ENCODE measurements at regions of chr5 and their contacts with region 1.

Region 1: DNA sequence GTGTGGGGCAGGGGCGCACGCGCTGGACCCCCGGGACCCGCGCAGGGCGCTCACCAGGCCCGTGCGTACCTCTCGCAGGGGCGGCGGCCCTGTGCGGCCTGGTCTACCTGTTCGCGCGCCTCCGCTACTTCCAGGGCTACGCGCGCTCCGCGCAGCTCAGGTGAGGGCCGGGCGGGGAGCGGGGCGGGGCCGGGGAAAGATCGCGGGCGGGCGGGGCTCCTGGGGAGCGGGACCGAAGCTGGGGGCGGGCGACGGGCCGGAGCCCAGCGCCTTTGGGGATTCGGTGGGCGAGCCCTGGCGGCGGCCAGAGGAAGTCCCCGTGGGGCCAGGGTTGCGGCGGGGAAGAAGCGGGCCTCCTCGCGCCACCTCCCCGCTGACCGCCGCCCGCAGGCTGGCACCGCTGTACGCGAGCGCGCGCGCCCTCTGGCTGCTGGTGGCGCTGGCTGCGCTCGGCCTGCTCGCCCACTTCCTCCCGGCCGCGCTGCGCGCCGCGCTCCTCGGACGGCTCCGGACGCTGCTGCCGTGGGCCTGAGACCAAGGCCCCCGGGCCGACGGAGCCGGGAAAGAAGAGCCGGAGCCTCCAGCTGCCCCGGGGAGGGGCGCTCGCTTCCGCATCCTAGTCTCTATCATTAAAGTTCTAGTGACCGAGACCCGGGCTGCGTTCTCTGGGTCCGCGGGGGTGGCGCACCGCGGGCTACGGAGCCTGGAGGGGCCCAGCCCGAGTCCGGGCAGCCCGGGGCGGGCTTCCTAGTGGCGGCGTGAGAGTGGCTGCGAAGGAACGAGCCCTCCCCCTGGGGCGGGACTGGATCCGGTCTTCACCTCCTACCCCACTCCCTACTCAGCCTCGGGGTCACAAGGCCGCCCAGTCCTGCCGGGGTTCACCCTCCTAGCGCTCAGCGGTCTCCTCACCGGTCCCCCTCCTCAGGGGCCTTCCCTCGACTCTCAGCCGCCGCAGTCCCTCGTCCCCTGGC is 2.4 kb downstream of the LTC4S start:
- H3K4me3 Mint-ChIP-seq: peak overlapping the region; percentile 72
- H3K27ac Mint-ChIP-seq: peak overlapping the region; percentile 59
- H3K4me1 Mint-ChIP-seq: peaks cover 52% of the 10 kb centered on the region
- H3K27me3 Mint-ChIP-seq: no peaks in the 10 kb centered on the region

Region 2: DNA sequence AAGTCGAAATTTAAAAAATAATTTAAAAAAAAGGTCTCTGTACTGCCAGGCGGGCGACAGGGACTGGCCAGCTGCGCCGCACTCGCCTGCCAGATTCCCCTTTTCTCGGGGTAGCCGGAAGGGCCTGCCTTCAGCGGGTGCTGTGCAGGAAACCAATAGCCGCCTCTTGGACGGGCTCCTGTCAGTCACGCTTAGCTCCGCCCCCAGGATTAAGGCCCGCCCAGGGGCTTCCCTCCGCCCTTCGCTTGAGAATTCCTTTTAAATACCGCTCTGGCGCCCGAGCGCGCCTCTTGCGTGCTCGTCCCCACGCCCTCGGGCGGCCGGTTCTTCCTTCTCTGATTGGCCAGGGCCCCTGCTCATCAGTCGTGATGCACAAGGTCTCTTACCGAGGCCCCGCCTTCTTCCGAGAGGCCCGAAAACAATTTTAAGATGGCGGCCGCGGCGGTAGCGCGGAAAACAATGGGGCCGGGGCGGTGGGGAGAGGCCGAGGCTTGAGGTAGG is 63.7 kb before region 1 on chr5 and contains the start of gene MAML1:
- intact Hi-C with region 1: loop called (anchors 5 kb)
- H3K4me3 Mint-ChIP-seq: peak within 1 kb of the TSS; percentile 87
- H3K27ac Mint-ChIP-seq: peak within 1 kb of the TSS; percentile 88
- H3K4me1 Mint-ChIP-seq: peaks cover 63% of the 10 kb centered on the region
- H3K27me3 Mint-ChIP-seq: no peaks in the 10 kb centered on the region

Region 3: DNA sequence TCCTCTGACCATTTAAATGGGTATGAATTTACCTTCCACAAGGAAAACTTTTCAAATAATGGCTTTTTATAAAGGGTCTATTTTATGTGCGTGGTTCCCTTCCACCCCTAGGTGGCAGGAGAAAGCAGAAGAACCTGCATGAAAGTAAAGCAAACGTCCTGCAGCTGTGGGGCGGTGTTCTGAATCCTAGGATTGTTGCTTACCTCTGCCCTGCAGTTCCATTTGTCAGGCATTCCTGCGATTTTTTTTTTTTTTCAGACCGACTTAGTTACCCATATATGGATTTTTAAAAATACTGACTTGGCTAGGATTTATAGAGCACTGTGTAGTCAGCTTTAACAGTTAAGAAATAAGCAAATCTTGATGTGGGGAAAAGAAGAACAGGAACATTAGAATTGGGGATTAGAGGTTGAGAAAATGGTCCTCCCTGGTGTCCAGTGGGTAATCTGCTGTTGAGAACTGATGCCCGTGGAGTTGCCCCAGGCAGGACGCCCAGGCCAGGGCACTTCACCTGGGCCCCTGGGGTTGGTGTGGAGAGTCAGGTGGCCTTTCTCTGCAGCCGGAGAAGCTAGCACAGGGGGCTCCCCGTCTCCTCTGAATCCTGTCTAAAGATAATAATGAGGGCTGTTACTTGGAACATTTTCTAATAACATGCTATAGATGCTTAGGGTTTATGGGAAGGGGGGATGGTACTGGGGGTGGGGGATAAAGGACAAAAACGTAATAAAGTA is 32.8 kb before region 1 on chr5:
- intact Hi-C with region 1: loop called (anchors 5 kb)
- H3K4me3 Mint-ChIP-seq: no peak overlapping the region
- H3K27ac Mint-ChIP-seq: no peak overlapping the region
- H3K4me1 Mint-ChIP-seq: peaks cover 90% of the 10 kb centered on the region
- H3K27me3 Mint-ChIP-seq: no peaks in the 10 kb centered on the region

Region 4: GRCh38 chr5:179777909-179778308 is 18.2 kb before region 1 on chr5:
- intact Hi-C with region 1: loop called (anchors 2 kb)
- H3K4me3 Mint-ChIP-seq: peak overlapping the region; percentile 51
- H3K27ac Mint-ChIP-seq: peak overlapping the region; percentile 89
- H3K4me1 Mint-ChIP-seq: peaks cover 84% of the 10 kb centered on the region
- H3K27me3 Mint-ChIP-seq: no peaks in the 10 kb centered on the region

Region 5: DNA sequence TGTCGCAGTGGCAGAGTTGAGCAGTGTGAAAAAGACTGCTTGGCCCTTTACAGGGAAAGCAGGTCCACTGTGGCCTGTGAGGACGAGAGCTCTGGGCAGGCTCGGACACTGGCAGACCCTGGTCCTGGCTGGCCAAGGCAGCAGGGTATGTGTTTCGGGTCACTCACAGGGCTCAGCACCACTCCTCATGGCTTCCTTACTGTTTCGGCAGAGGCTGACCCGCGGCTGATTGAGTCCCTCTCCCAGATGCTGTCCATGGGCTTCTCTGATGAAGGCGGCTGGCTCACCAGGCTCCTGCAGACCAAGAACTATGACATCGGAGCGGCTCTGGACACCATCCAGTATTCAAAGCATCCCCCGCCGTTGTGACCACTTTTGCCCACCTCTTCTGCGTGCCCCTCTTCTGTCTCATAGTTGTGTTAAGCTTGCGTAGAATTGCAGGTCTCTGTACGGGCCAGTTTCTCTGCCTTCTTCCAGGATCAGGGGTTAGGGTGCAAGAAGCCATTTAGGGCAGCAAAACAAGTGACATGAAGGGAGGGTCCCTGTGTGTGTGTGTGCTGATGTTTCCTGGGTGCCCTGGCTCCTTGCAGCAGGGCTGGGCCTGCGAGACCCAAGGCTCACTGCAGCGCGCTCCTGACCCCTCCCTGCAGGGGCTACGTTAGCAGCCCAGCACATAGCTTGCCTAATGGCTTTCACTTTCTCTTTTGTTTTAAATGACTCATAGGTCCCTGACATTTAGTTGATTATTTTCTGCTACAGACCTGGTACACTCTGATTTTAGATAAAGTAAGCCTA is 40.3 kb after region 1 on chr5:
- intact Hi-C with region 1: no loop called
- H3K4me3 Mint-ChIP-seq: no peak overlapping the region
- H3K27ac Mint-ChIP-seq: no peak overlapping the region
- H3K4me1 Mint-ChIP-seq: peaks cover 9% of the 10 kb centered on the region
- H3K27me3 Mint-ChIP-seq: no peaks in the 10 kb centered on the region

Region 6: GRCh38 chr5:180755601-180756000 is 959.5 kb after region 1 on chr5:
- intact Hi-C with region 1: no loop called
- H3K4me3 Mint-ChIP-seq: no peak overlapping the region
- H3K27ac Mint-ChIP-seq: no peak overlapping the region
- H3K4me1 Mint-ChIP-seq: no peaks in the 10 kb centered on the region
- H3K27me3 Mint-ChIP-seq: peaks cover 11% of the 10 kb centered on the region